MCF 10A (cell line): ENCODE measurements at regions of chr1 and their contacts with region 1.

Region 1: DNA sequence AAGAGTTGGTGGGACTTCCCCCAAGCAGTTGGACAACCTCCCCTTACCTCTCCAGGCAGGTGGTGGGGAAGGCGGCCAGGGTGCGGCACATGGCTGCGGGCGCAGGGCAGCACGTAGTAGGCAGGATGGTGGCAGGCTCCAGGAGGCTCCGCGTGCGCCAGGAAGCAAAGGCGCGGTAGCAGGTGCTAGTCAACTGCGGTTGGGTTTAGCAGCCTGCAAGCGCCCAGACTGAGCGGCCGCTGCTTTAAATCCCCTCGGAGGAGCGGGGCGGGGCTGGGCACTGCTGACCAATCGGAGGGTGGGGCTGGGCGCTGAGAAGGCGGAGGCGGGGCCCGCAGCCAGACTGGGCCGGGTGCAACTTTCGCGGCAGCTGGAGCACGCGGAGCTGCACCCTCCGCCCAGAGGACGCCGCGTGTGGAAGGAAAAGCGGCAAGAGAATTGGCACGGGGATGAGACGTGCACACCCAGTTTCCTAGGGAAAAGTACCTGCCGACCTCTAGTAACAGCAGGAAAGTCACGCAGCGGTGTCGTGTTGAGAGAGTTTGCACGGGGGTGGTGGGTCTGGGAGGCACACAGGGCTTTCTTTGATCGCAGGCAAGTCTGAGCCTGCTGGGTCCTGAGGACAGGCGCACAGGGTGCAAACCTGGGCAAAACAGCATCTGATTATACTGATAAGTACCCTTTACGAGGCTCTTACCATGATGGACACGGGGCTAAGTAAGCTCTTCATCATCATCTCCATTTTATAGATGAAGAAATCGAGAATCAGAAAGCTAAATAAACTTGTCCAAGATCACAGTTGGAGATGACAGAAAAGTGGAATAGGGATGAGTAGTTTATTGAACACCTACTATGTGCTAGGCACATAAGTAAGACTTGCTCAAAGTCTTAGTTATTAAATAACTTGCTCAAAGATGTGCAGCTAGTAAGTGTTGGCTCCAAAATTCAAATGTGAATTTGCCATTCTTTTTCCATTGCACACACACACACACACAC is at the start of gene RGS16:
- DNase-seq: peak; percentile 95
- H3K4me3 Mint-ChIP-seq: no peak within 1 kb of the TSS
- H3K27ac Mint-ChIP-seq: peak within 1 kb of the TSS; percentile 13
- H3K4me1 Mint-ChIP-seq: peaks cover 12% of the 10 kb centered on the region
- H3K27me3 Mint-ChIP-seq: no peaks in the 10 kb centered on the region
- CTCF ChIP-seq: no peak
- total RNA-seq, gene RGS16: 11.9 and 13.7 TPM in 2 replicates

Region 2: GRCh38 chr1:182588500-182589452 is 15.7 kb before region 1 on chr1 and contains the start of gene RNASEL:
- CTCF ChIA-PET with region 1: interaction called, 59 read pairs
- POLR2A ChIA-PET with region 1: interaction called, 10 read pairs
- intact Hi-C with region 1: no loop called
- DNase-seq: peak; percentile 85
- H3K4me3 Mint-ChIP-seq: peak within 1 kb of the TSS; percentile 84
- H3K27ac Mint-ChIP-seq: peak within 1 kb of the TSS; percentile 93
- H3K4me1 Mint-ChIP-seq: peaks cover 5% of the 10 kb centered on the region
- H3K27me3 Mint-ChIP-seq: no peaks in the 10 kb centered on the region
- CTCF ChIP-seq: no peak
- total RNA-seq, gene RNASEL: 4.2 and 8.0 TPM in 2 replicates

Region 3: DNA sequence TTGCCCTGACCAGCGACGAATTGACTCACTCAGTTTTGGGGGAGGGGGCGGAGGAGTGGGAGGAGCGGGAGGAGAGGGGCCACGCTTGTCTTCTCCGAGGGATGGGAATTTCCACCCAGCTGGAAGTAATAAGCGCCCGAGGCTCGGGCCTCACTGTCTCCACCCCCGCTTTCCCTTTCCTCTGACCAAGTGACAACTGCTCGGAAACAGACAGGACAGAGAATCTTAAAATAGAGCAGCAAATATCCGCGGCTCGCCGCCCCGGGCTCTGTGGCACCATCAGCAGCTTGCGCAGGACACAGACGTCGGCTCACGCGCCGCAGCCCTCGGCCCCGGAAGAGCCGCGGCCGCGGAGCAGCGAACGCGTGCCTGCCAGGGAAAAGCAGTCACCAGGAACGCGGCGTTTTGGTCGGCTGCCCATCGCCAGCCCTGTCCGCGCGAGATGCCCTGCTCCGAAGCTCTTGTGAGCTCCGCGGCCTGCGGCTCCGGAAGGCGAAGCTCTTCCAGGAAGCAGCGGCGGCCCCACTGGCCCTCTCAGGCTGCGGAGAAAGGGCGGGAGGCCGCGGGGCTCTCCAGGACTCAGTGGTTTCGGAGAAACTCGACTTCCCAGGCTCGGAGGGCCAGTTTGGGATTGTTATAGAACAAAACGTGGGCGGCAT is 10.5 kb after region 1 on chr1:
- CTCF ChIA-PET with region 1: interaction called, 15 read pairs
- POLR2A ChIA-PET with region 1: interaction called, 33 read pairs
- intact Hi-C with region 1: no loop called
- DNase-seq: peak; percentile 88
- H3K4me3 Mint-ChIP-seq: peak overlapping the region; percentile 63
- H3K27ac Mint-ChIP-seq: no peak overlapping the region
- H3K4me1 Mint-ChIP-seq: peaks cover 44% of the 10 kb centered on the region
- H3K27me3 Mint-ChIP-seq: no peaks in the 10 kb centered on the region
- CTCF ChIP-seq: no peak

Region 4: DNA sequence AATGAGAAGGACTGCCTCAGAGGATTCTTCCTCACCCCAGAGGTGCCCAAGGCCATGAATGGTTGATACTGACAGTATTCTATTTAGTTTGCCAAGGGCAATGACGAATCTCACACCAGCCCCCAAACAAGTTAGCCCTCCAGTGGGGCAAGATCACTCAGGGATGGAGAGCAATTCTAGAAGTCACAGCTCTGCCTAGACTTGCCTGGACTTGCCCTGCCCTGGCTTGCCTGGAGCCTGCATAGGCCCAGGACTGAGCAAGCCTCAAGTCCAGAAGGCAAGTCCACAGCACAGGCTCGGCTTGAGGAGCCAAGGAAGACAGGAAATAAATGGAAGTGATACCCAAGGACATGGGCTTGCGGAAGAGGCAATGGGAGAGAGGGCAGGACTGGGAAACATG is 39.2 kb after region 1 on chr1:
- CTCF ChIA-PET with region 1: interaction called, 7 read pairs
- POLR2A ChIA-PET with region 1: interaction called, 10 read pairs
- intact Hi-C with region 1: no loop called
- DNase-seq: peak; percentile 81
- H3K4me3 Mint-ChIP-seq: no peak overlapping the region
- H3K27ac Mint-ChIP-seq: peak overlapping the region; percentile 95
- H3K4me1 Mint-ChIP-seq: peaks cover 8% of the 10 kb centered on the region
- H3K27me3 Mint-ChIP-seq: no peaks in the 10 kb centered on the region
- CTCF ChIP-seq: no peak

Region 5: DNA sequence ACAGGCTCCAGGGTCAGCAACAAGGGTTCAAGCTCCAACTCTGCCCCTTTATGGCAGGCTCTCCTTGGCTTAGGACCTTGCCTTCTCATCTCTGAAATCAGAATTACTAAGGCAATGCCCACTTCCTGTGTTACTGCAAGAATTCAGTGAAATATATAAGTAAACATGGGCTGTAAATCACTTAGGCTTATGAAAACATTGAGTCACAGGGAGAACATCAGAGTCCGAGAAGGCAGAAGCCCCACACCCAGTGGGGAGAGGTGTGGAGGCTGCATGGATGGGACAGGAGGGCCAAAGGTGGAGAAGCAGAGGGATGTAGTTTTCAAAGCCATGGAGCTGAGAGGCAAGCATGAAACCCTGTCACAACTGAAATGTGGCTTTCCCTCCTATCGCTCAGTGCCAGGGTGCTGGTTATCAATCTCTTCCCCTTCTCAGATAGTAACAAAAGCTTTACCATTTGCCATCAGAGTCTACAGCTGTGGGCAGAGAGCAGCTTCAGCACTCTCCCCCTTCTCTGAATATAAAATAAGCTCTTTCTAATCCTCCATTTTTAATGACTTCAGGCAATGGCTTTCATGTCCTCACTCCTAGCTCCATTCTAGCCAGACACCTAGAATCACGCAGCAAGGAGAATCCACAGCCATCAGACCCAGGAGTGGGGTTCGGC is 76.6 kb after region 1 on chr1:
- CTCF ChIA-PET with region 1: interaction called, 3 read pairs
- POLR2A ChIA-PET with region 1: no interaction called
- intact Hi-C with region 1: loop called (anchors 5 kb)
- DNase-seq: peak; percentile 78
- H3K4me3 Mint-ChIP-seq: no peak overlapping the region
- H3K27ac Mint-ChIP-seq: no peak overlapping the region
- H3K4me1 Mint-ChIP-seq: peaks cover 29% of the 10 kb centered on the region
- H3K27me3 Mint-ChIP-seq: no peaks in the 10 kb centered on the region
- CTCF ChIP-seq: no peak

Region 6: GRCh38 chr1:182789138-182790076 is 184.9 kb after region 1 on chr1 and contains the start of gene NPL:
- CTCF ChIA-PET with region 1: interaction called, 991 read pairs
- POLR2A ChIA-PET with region 1: interaction called, 151 read pairs
- intact Hi-C with region 1: no loop called
- DNase-seq: peak; percentile 80
- H3K4me3 Mint-ChIP-seq: peak within 1 kb of the TSS; percentile 86
- H3K27ac Mint-ChIP-seq: peak within 1 kb of the TSS; percentile 72
- H3K4me1 Mint-ChIP-seq: peaks cover 17% of the 10 kb centered on the region
- H3K27me3 Mint-ChIP-seq: no peaks in the 10 kb centered on the region
- CTCF ChIP-seq: no peak
- total RNA-seq, gene NPL: 4.5 and 6.2 TPM in 2 replicates

Region 7: GRCh38 chr1:182839209-182840065 is 235.0 kb after region 1 on chr1 and contains the start of gene DHX9:
- CTCF ChIA-PET with region 1: interaction called, 5 read pairs
- POLR2A ChIA-PET with region 1: interaction called, 11 read pairs
- intact Hi-C with region 1: no loop called
- DNase-seq: peak; percentile 93
- H3K4me3 Mint-ChIP-seq: peak within 1 kb of the TSS; percentile 88
- H3K27ac Mint-ChIP-seq: peak within 1 kb of the TSS; percentile 80
- H3K4me1 Mint-ChIP-seq: peaks cover 32% of the 10 kb centered on the region
- H3K27me3 Mint-ChIP-seq: no peaks in the 10 kb centered on the region
- CTCF ChIP-seq: peak; percentile 17
- total RNA-seq, gene DHX9: 105 and 107 TPM in 2 replicates